Head of caudate nucleus (tissue), 42 donors: ENCODE measurements at regions of chr3 and their contacts with region 1.

Region 1: DNA sequence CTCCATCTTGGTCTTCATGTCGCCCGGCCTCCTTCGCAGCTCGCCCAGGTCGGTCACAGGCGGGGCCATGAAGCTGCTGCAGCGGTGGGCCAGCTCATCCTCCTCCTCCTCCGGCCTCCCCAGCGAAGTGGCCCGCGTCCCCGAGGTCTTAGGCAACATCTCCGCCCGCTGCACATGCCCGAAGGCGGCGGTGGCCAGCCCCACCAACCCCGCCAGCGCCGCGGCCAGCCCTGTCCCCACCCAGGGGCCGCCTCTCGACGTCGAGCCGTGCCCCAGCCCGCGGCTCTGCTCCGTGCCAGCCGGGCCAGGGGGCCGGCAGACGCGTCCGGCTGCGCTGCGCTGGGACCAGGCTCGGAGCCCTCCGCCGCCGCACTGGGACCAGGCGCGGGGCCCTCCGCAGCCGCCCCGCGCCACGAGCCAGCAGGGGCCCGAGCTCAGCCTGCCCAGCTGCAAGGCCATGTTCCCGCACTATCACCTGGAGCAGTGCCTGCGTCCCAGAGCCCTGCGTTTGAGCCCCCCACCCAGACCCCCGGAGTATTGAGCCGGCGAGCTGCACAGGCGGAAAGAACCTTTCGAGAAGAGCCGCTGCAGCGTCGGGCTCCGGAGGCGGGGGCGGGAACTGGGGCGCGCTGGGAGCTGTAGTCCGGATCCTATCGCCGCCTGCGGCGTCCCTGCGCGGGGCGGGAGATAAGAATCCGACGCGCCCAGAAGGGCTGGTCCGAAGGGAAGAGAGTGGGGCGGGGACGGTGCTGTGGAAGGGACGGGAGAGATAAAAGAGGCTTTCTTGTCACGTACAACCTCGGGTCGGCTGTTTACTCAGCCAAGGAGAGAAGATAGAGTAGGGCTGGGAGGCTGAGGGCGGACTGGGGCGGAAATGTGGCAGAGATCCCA is at the start of gene CPOX:
- DNase-seq: peak; percentile 81 to 97 (median 94)

Region 2: DNA sequence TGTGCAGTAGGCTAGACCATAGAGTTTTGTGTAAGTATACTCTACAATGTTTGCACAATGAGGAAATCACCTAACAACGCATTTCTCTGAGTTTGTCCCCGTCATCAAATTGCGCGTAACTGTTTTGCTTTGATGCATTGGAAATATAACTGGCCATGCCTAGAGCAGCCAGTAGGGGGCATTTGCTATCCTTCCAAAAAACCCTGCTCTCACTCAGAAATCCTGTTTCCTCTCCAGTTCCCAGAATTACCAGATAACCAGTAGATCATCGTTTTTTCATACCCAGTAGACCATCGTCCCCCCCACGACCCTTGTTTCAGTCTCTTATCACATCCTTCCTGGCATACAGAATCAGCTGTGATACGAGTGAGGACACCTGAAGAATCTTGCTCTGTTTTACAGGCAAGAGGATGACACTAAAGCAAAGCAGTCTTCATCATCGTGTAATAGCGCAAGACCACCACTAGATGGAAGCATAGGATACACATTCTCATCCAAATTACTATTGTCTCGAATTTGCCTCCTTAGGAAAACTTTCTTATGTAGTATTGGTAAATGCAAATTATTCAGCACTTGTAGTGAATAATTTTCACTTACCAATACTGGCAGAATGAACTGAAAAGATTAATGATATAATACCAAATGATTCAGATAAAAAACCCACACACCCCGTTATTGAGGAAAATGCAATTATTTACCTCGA is 553.8 kb before region 1 on chr3:
- intact Hi-C with region 1: loop called (anchors 10 kb)
- DNase-seq: peak; percentile 4 to 87 (median 68)

Region 3: DNA sequence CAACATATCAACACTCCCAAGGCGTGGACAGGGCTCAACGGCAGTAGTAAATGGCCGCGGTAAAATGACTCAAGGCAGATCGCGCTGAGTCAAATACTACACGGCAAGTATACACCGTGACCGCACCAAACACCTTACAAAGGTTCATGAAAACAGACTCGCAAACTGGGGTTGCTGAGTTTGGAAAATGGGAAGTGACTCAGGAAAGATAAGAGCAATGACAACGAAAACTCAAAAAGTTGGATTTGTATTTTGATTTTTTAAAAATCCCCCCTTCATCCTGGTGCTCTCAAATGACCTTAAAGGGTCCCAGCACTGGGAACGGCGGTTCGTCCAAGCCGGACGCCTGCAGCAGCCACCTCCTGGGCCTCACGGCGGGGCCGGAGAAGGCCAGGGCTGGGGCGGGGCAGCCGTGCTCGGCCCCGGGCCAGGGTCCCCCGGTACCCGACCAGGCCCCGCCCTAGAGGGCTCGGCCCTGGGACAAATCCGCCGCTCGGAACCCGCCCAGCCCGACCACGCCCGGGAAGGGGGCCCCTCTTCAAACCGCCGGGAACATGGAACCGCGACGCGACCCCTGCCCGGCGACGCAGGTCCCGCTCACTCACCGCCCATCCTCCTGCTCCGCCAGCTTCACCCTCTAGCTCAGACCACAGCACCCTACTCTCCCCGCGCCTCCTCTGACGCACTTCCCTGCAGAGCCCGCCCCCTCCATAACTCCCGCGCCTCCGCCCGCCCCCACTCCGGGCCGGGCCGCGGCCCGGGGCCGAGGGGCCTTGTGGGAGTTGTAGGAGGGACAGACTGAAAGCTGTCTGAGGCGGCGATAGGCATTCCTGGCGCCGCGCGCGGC is 70.8 kb before region 1 on chr3 and contains the start of gene CLDND1:
- intact Hi-C with region 1: loop called (anchors 1 kb)
- DNase-seq: peak; percentile 97 to 100 (median 99)

Region 4: DNA sequence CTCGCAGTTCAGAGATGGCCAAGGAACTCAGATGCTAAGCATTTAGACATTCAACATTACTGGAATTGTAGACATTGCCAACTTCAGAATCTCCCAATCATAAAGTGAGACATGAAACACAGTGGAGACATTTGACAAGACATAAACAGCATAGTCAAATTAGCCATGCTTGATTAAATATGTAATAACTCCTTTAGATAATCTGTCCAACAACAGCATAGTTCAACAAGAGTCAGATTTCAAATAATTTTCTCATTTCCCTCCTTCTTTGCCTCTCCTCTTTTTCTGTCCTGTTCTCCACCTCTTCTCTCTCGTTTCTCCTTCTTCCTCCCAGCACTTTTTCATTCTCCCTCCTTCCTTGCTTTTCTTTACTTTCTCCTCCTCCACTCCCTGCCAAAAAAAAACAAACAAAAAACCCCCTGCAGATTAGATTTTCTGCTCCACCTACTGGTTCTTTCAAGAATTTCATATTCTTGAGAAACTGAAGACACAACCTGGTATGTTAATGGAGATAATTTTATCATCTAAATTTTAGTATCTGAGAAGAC is 20.0 kb before region 1 on chr3:
- intact Hi-C with region 1: no loop called
- DNase-seq: no peak

Region 5: GRCh38 chr3:98901392-98902350 is 308.4 kb after region 1 on chr3 and contains the start of gene DCBLD2:
- intact Hi-C with region 1: loop called (anchors 5 kb)
- DNase-seq: peak; percentile 96 to 100 (median 99)

Region 6: GRCh38 chr3:99094606-99095005 is 501.3 kb after region 1 on chr3:
- intact Hi-C with region 1: no loop called
- DNase-seq: no peak